ENCODE measurements at regions of chr11 and their contacts with region 1.

Region 1: GRCh38 chr11:41612415-41612814 is 153.0 kb upstream of the LRRC4C start:
- DNase-seq: no peak
- H3K4me3 ChIP-seq: no peak overlapping the region
- H3K27ac ChIP-seq: no peak overlapping the region
- H3K4me1 ChIP-seq: no peaks in the 10 kb centered on the region
- H3K27me3 ChIP-seq: no peaks in the 10 kb centered on the region
- CTCF ChIP-seq: peak; percentile 30; the same call in 1 of the 2 replicates
- EP300 ChIP-seq: no peak
- RAD21 ChIP-seq: peak; percentile 56

Region 2: DNA sequence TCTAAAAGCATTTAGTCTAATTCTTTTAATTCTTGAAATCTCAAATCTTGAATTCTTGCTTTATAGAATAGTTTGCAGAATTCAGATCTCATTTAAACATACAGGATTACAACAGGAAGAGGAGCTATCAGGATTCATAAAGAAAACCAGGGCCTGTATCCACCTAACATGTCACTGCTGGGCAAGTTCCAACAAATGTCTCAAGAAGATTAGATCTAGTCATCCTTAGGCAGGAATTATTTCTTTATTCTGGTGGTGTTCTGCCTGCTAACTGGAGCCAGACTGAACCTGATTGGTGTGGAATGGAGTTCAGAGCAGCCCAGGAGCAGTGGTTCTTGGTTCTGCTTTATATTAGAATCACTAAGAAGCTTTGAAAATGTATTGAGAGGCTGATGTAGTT is 653.7 kb before region 1 on chr11:
- CTCF ChIA-PET with region 1: no interaction called
- POLR2A ChIA-PET with region 1: no interaction called
- DNase-seq: no peak
- H3K4me3 ChIP-seq: no peak overlapping the region
- H3K27ac ChIP-seq: no peak overlapping the region
- H3K4me1 ChIP-seq: no peaks in the 10 kb centered on the region
- H3K27me3 ChIP-seq: no peaks in the 10 kb centered on the region
- CTCF ChIP-seq: no peak
- EP300 ChIP-seq: no peak
- RAD21 ChIP-seq: no peak

Region 3: DNA sequence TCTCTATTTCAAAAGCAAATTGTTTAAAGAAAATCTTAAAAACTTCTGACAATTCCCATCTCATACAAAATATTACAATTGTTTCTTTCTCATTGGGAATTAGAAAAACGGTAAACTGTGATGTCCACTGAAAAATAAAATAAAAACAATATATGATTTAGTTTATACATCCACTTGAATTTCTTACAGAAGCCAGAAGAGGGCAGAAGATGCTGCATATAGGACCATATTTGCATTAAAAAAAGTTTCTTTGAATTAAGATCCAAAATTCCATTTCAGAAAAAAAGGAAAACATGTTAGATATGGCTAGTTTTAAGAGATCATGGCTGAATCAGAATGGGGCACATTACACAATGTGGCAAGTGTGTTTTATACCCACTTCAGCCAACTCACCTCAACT is 113.7 kb before region 1 on chr11:
- CTCF ChIA-PET with region 1: interaction called, 14 read pairs
- POLR2A ChIA-PET with region 1: no interaction called
- DNase-seq: peak; percentile 5
- H3K4me3 ChIP-seq: no peak overlapping the region; a peak in 1 of 4 replicates
- H3K27ac ChIP-seq: no peak overlapping the region
- H3K4me1 ChIP-seq: peaks cover 0 to 10% of the 10 kb centered on the region in 2 experiments; a peak in 2 of 4 replicates
- H3K27me3 ChIP-seq: no peaks in the 10 kb centered on the region
- CTCF ChIP-seq: peak; percentile 54
- EP300 ChIP-seq: no peak
- RAD21 ChIP-seq: peak; percentile 70

Measured in SK-N-SH (cell line).